IMR-90 (cell line): ENCODE measurements at regions of chr6 and their contacts with region 1.

Region 1: DNA sequence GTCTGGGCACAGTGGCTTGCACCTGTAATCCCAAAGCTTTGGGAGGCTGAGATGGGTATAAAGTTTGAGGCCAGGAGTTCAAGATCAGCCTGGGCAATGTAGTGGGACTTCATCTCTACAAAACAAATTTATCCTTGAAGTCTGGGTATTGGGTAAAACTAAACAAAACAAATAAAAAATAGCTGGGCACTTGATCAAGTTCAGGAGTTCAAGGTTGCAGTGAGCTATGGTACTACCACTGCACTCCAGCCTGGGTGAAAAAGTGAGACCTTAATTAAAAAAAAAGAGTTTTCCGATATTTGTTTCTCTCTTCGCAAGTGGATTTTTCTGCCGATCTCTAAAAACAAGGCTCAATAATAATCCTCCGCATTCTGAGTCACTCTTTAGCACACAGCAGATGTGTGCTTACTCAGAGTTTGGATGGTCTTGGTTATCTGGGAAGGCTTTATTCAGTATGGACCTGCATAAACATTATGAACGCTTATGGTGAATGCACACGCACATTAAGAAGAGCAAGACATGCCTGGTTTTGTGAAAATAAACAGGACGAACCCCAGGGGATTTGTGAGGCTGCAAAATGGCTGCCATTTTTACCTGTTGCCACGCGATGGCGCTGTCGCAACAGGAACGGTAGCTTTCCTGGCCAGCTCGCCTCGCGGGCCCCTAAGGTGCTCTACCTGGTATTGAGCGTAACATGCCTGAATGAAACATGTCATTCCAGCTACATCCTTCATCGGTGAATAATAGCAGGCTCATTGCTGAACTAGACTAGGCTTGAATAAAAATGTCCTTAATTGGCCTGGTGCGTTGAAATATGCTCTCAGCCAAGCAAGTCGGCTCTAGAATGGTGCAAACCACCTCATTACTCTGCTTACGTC is 6.0 kb downstream of the OPN5 start:
- DNase-seq: peak; percentile 51
- ATAC-seq: peak; percentile 84
- H3K4me3 ChIP-seq: no peak overlapping the region
- H3K27ac ChIP-seq: no peak overlapping the region
- H3K4me1 ChIP-seq: no peaks in the 10 kb centered on the region; the same call in 1 of the 2 replicates
- H3K27me3 ChIP-seq: peaks cover 6% of the 10 kb centered on the region; the same call in 1 of the 2 replicates
- CTCF ChIP-seq: peak; percentile 85
- POLR2A ChIP-seq: no peak
- RAD21 ChIP-seq: peak; percentile 92

Region 2: DNA sequence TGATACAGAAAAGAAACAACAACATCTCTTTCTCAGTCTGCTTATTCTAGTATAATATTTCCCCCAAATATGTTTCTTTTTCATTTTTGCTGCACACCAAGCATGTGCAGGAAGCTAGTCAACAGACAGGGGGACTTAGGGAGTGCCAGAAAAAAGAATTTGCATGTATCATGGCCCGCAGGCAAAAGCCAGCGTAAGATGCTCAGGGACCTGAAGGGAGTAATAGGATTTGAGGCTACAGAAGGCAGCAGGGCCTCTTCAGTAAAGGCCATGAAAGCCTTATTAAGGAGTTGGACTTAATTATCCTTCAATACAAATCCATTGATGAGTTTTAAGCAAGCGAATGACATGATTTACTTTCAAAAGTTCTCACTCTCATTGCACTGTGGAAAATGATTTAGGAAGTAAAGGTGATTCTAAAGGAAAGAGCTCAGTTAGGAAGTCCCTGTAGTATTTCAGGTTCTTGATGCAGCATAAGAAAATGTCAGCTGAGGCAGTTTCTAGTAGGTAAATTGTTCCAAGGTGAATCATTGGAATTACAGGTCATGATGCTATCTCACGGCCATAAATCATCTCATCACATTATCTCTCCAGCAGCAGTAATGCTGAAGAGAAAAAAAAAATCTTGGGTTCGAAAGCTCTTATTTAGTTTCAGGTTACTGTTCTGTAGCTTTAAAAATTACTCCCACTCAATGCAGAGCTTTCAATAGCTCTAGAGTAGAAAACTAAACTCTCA is 228.3 kb after region 1 on chr6:
- CTCF ChIA-PET with region 1: no interaction called
- POLR2A ChIA-PET with region 1: no interaction called
- dilution Hi-C with region 1: no loop called
- in situ Hi-C with region 1: no loop called
- intact Hi-C with region 1: no loop called
- DNase-seq: no peak
- ATAC-seq: no peak
- H3K4me3 ChIP-seq: no peak overlapping the region
- H3K27ac ChIP-seq: no peak overlapping the region
- H3K4me1 ChIP-seq: no peaks in the 10 kb centered on the region
- H3K27me3 ChIP-seq: no peaks in the 10 kb centered on the region
- CTCF ChIP-seq: no peak
- POLR2A ChIP-seq: no peak
- RAD21 ChIP-seq: no peak

Region 3: GRCh38 chr6:48476257-48476656 is 688.4 kb after region 1 on chr6:
- CTCF ChIA-PET with region 1: no interaction called
- POLR2A ChIA-PET with region 1: no interaction called
- dilution Hi-C with region 1: no loop called
- in situ Hi-C with region 1: loop called (anchors 25 kb)
- intact Hi-C with region 1: loop called (anchors 2 kb)
- DNase-seq: peak; percentile 30
- ATAC-seq: peak; percentile 71
- H3K4me3 ChIP-seq: no peak overlapping the region
- H3K27ac ChIP-seq: no peak overlapping the region
- H3K4me1 ChIP-seq: no peaks in the 10 kb centered on the region
- H3K27me3 ChIP-seq: no peaks in the 10 kb centered on the region
- CTCF ChIP-seq: peak; percentile 57
- POLR2A ChIP-seq: no peak
- RAD21 ChIP-seq: peak; percentile 66

Region 4: GRCh38 chr6:48859562-48860123 is 1071.8 kb after region 1 on chr6:
- CTCF ChIA-PET with region 1: no interaction called
- POLR2A ChIA-PET with region 1: no interaction called
- dilution Hi-C with region 1: no loop called
- in situ Hi-C with region 1: no loop called
- intact Hi-C with region 1: no loop called
- DNase-seq: no peak
- ATAC-seq: no peak
- H3K4me3 ChIP-seq: no peak overlapping the region
- H3K27ac ChIP-seq: no peak overlapping the region
- H3K4me1 ChIP-seq: no peaks in the 10 kb centered on the region
- H3K27me3 ChIP-seq: no peaks in the 10 kb centered on the region
- CTCF ChIP-seq: no peak
- POLR2A ChIP-seq: no peak
- RAD21 ChIP-seq: no peak

Region 5: GRCh38 chr6:49409951-49410542 is 1622.2 kb after region 1 on chr6:
- CTCF ChIA-PET with region 1: interaction called, 21 read pairs
- POLR2A ChIA-PET with region 1: no interaction called
- dilution Hi-C with region 1: no loop called
- in situ Hi-C with region 1: loop called (anchors 10 kb)
- intact Hi-C with region 1: loop called (anchors 1 kb)
- DNase-seq: peak; percentile 61
- ATAC-seq: peak; percentile 97
- H3K4me3 ChIP-seq: no peak overlapping the region
- H3K27ac ChIP-seq: no peak overlapping the region
- H3K4me1 ChIP-seq: no peaks in the 10 kb centered on the region
- H3K27me3 ChIP-seq: no peaks in the 10 kb centered on the region
- CTCF ChIP-seq: peak; percentile 84
- POLR2A ChIP-seq: no peak
- RAD21 ChIP-seq: peak; percentile 80

Region 6: GRCh38 chr6:49606696-49607390 is 1819.0 kb after region 1 on chr6:
- CTCF ChIA-PET with region 1: no interaction called
- POLR2A ChIA-PET with region 1: no interaction called
- dilution Hi-C with region 1: no loop called
- in situ Hi-C with region 1: no loop called
- intact Hi-C with region 1: loop called (anchors 5 kb)
- DNase-seq: peak; percentile 80
- ATAC-seq: peak; percentile 97
- H3K4me3 ChIP-seq: no peak overlapping the region
- H3K27ac ChIP-seq: no peak overlapping the region
- H3K4me1 ChIP-seq: no peaks in the 10 kb centered on the region
- H3K27me3 ChIP-seq: no peaks in the 10 kb centered on the region
- CTCF ChIP-seq: peak; percentile 83
- POLR2A ChIP-seq: no peak
- RAD21 ChIP-seq: peak; percentile 59